ENCODE measurements at regions of chr5 and their contacts with region 1.

Region 1: DNA sequence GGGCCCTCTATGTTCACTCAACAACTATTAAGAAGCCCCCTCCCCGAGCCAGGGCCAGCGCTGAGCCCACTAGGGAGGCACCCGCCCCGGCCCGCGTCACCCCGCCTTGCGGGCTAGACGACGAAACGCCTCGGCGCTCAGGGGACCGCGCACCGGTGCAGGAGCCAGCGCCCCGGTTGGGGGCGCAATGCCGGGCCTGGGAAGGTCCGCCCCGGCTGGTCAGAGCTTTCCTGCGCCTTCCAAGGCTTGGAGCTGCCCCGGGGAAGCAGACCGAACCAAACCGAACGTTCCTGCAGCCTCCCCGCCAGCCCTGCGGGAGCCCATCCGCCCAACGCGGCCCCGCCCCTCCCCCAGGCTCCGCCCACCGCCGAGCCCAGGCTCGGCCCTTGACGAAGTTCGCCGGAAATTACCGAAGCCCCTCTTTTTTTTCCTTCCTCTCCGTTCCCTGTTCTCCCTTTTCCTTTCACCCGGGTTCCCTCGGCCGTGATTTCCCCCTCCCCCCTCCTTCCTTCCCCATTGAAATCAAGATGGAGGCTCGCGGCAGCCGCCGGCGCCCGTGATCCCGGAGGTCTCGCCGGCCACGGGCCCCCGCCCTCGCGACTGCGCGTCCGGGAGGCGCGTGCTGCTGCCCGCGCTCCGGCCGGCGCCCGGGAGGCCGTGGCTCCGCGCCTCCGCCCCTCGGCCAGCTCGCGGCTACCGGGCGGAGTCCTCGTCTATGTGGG is at the start of gene TRIO:
- DNase-seq: peak; percentile 77
- H3K4me3 ChIP-seq: peak within 1 kb of the TSS; percentile 84
- H3K27ac ChIP-seq: peak within 1 kb of the TSS; percentile 98
- H3K27me3 ChIP-seq: no peaks in the 10 kb centered on the region
- CTCF ChIP-seq: peak; percentile 45
- polyA plus RNA-seq, gene TRIO: 268 TPM in 2 replicates

Region 2: DNA sequence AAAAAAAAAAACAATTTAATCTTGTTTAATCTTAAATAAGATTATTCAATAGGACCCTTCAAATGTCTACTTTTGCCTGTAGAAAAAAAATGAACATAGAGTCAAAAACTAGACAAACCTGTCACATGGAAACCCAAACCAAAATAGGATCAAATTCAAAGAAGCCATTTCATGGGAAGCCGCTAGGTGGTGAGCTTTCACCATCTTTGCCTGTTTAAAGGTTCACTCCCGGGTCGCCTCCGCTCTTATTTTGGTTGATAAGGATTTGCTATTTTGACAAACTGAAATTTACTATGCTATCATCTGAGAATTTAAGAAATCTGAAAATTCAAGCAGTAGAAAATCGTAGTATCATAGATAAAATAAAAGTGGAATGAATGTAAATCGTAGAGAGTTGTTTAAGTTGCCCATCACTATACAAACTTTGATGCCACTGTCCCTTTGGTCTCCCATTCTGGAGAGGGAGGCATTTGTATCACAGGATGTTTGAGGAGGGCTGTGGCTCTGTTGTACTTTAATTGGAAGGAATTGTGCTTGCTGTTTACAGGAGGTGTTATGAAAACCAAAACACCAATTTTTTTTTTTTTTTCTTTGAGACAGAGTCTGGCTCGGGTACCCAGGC is 155.0 kb before region 1 on chr5:
- CTCF ChIA-PET with region 1: interaction called, 11 read pairs
- POLR2A ChIA-PET with region 1: interaction called, 7 read pairs
- DNase-seq: peak; percentile 55
- H3K4me3 ChIP-seq: no peak overlapping the region
- H3K27ac ChIP-seq: no peak overlapping the region
- H3K27me3 ChIP-seq: no peaks in the 10 kb centered on the region
- CTCF ChIP-seq: peak; percentile 87